Mammary epithelial cell (primary cell): ENCODE measurements at regions of chr7 and their contacts with region 1.

Region 1: GRCh38 chr7:114663502-114663901 is 248.9 kb downstream of the FOXP2 start:
- DNase-seq: peak; percentile 3
- H3K4me3 ChIP-seq: no peak overlapping the region
- H3K27ac ChIP-seq: no peak overlapping the region
- H3K4me1 ChIP-seq: no peaks in the 10 kb centered on the region
- H3K27me3 ChIP-seq: no peaks in the 10 kb centered on the region
- CTCF ChIP-seq: peak in 1 of 2 donors; percentile 37

Region 2: GRCh38 chr7:114310345-114311110 is 353.0 kb before region 1 on chr7:
- CTCF ChIA-PET with region 1: no interaction called
- dilution Hi-C with region 1: no loop called
- in situ Hi-C with region 1: no loop called
- intact Hi-C with region 1: loop called (anchors 5 kb)
- DNase-seq: no peak
- H3K4me3 ChIP-seq: no peak overlapping the region
- H3K27ac ChIP-seq: no peak overlapping the region
- H3K4me1 ChIP-seq: no peaks in the 10 kb centered on the region
- H3K27me3 ChIP-seq: no peaks in the 10 kb centered on the region
- CTCF ChIP-seq: peak in 1 of 2 donors; percentile 26

Region 3: DNA sequence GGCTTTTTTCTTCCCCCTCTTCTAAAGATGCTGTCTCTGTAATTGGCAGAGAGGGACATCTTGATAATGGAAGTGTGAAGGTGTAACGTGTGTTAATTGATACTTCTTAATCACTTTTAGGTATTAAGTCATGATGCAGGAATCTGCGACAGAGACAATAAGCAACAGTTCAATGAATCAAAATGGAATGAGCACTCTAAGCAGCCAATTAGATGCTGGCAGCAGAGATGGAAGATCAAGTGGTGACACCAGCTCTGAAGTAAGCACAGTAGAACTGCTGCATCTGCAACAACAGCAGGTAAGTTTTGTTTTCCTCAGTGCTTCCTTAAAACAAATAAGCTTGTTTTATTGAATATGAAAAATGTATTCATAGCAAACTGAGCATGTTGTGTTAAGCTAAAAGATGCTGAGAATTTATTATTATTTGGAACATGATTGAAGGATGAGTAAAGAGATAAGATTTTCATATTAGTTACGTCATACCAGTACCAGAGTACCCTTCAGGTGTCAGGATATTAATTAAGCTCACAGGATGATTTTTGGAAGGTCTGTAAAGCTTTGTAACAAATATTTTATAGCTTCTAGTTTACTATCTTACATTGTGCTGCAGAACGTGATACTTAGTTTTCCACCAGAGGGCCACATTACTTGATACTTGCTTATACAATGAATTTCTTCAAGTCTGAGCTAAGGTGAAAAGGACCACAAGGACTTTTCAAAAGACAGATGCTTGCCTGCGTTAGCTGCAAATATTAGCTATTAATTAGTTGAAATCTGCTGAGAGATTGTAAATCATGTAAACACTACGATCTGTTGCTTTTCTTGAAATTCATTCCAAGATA is 236.9 kb before region 1 on chr7:
- CTCF ChIA-PET with region 1: interaction called, 14 read pairs
- dilution Hi-C with region 1: no loop called
- in situ Hi-C with region 1: no loop called
- intact Hi-C with region 1: no loop called
- DNase-seq: no peak
- H3K4me3 ChIP-seq: no peak overlapping the region
- H3K27ac ChIP-seq: no peak overlapping the region
- H3K4me1 ChIP-seq: no peaks in the 10 kb centered on the region
- H3K27me3 ChIP-seq: peaks cover 2% of the 10 kb centered on the region
- CTCF ChIP-seq: peak; percentile 17 to 42